ENCODE measurements at regions of chr16 and their contacts with region 1.

Region 1: DNA sequence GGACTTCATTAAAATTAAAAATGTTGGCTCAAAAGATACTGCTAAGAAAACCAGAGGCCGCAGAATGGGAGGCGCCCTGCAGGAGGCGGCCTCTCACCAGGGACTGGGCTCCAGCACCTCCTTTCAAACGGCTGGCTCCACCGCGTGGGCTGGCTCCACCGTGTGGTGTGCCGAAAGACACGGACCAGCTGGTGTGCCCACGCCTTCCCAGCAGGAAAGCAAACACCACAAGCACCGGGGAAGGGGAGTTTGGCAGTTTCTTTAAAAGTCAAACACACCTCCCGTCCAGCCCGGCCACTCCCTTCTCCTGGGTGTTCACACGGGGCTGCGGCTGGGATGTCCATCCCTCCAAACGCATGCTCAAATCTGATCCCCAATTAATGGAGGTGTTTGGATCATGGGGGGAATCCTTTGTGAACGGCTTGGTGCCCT is 13.9 kb downstream of the HAGH start:
- DNase-seq: peak; percentile 75 to 87 (median 82)
- H3K4me3 ChIP-seq: no peak overlapping the region
- H3K27ac ChIP-seq: no peak overlapping the region
- H3K4me1 ChIP-seq: peaks cover 0 to 4% (median 3%) of the 10 kb centered on the region in 4 experiments
- H3K27me3 ChIP-seq: no peaks in the 10 kb centered on the region

Region 2: DNA sequence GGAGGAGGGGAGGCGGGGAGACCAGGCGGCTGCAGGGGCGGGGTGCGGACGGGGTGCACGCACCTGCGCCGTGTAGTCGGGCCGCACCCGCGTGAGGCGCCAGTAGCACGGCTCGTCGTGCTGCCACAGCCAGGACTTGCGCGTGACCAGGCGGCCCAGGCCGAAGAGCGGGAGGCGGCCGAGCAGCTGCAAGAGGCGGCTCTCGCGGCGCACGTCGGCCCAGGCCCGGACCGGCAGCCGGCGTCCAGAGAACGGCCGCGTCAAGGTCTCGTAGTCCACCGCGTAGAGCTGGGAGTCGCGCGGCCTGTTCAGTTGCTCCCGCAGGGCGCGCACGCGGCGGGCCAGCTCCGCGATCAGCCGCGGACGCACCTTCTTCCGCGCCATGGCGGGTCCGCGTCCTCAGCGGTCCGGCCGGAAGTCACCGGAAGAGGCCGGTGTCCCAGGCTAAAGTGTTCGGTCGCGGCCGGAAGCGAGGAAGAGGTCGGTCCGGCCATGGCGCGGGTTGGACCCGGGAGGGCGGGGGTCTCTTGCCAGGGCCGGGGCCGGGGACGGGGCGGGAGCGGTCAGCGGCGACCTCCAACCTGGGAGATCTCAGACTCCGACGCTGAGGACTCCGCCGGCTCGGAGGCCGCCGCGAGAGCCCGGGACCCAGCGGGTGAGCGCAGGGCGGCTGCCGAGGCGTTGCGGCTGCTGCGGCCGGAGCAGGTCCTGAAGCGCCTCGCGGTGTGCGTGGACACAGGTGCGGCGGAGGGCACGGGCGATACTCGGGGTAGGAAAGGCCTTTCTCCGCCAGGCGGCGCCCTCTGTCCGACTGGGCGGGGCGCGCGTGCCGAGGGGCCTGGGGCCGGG is 39.8 kb before region 1 on chr16 and contains the starts of genes EME2 and MRPS34:
- CTCF ChIA-PET with region 1: interaction called, 10 read pairs
- POLR2A ChIA-PET with region 1: interaction called, 4 read pairs
- DNase-seq: peak; percentile 82 to 87 (median 85)
- H3K4me3 ChIP-seq: peak within 1 kb of the TSS; percentile 69 to 94 (median 84)
- H3K27ac ChIP-seq: peak within 1 kb of the TSS; percentile 66 to 79
- H3K4me1 ChIP-seq: peaks cover 5 to 34% (median 32%) of the 10 kb centered on the region in 4 experiments
- H3K27me3 ChIP-seq: no peaks in the 10 kb centered on the region

Region 3: GRCh38 chr16:1782352-1783091 is 30.2 kb before region 1 on chr16 and contains the starts of genes NUBP2 and SPSB3:
- CTCF ChIA-PET with region 1: interaction called, 10 read pairs
- POLR2A ChIA-PET with region 1: no interaction called
- DNase-seq: peak; percentile 100
- H3K4me3 ChIP-seq: peak within 1 kb of the TSS; percentile 78 to 95 (median 90)
- H3K27ac ChIP-seq: peak within 1 kb of the TSS; percentile 58 to 82
- H3K4me1 ChIP-seq: peaks cover 0 to 22% (median 21%) of the 10 kb centered on the region in 4 experiments
- H3K27me3 ChIP-seq: no peaks in the 10 kb centered on the region

Measured in common myeloid progenitor, CD34-positive (primary cell).